ENCODE measurements at regions of chr1 and their contacts with region 1.

Region 1: GRCh38 chr1:226274138-226274537 is 34.8 kb downstream of the LIN9 start:
- DNase-seq: no peak
- H3K4me3 ChIP-seq: no peak overlapping the region
- H3K27ac ChIP-seq: no peak overlapping the region
- H3K4me1 ChIP-seq: no peaks in the 10 kb centered on the region
- CTCF ChIP-seq: no peak

Region 2: DNA sequence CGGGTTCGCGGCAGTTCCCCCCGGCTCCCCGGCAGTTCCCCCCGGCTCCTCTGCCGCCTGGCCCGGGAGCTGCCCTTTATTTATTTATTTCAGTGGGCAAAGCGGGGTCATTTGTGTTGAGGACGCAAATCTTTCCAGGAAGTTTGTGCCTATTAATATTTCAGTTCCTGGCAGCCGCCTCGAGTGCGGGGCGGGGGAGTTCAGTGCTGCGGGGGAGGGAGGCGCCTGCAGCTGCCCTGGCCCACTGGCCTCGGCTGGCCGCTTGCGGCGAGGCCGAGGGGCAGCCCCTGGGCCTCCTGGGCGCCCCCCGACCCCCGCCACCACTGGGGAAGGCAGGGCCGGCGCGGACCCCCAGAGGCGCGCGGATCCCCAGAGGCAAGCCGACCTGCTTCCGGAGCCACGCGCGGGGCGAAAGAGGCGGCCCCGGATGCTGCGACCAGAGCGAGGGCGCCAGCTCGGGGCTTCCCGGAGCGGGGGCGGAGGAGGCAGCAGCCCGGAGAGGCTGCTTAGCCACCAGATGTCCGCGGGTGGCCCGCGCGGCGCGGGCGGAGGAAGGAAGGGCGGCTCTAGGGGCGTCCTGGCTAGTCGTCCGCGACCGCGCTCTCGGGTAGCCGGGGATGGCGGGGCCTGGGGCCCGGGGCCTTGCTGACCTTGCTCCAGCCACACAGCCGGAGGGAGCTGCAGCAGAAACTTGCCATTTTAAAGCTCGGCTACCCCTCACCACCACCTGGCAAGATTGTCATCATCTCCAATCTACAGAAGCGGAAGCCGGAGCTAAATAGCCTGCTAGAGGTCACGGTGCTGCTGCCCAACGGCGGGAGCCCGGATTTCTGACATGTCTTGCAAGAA is 163.7 kb before region 1 on chr1:
- CTCF ChIA-PET with region 1: no interaction called
- POLR2A ChIA-PET with region 1: no interaction called
- intact Hi-C with region 1: no loop called
- DNase-seq: peak; percentile 88
- H3K4me3 ChIP-seq: peak overlapping the region; percentile 73
- H3K27ac ChIP-seq: peak overlapping the region; percentile 80
- H3K4me1 ChIP-seq: peaks cover 41% of the 10 kb centered on the region
- CTCF ChIP-seq: 0 out of 2 replicates have a peak, but pooled peaks have one; percentile 14

Region 3: DNA sequence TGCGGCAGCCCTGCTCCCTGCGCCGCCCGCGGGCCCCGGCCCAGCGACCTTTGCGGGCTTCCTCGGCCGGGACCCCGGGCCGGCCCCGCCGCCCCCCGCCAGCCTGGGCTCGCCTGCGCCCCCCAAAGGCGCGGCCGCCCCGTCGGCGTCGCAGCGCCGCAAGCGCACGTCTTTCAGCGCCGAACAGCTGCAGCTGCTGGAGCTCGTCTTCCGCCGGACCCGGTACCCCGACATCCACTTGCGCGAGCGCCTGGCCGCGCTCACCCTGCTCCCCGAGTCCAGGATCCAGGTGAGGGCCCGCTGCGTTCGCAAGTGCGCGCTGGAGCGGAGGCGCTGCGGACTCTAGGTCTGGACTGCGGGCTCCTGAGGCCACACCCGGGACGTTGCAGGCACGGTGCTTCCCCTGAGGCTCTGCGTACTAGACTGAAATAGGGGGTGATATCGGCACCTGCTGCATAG is 50.3 kb before region 1 on chr1:
- CTCF ChIA-PET with region 1: no interaction called
- POLR2A ChIA-PET with region 1: no interaction called
- intact Hi-C with region 1: loop called (anchors 5 kb)
- DNase-seq: peak; percentile 77
- H3K4me3 ChIP-seq: peak overlapping the region; percentile 67
- H3K27ac ChIP-seq: no peak overlapping the region
- H3K4me1 ChIP-seq: peaks cover 29% of the 10 kb centered on the region
- CTCF ChIP-seq: peak; percentile 58

Region 4: DNA sequence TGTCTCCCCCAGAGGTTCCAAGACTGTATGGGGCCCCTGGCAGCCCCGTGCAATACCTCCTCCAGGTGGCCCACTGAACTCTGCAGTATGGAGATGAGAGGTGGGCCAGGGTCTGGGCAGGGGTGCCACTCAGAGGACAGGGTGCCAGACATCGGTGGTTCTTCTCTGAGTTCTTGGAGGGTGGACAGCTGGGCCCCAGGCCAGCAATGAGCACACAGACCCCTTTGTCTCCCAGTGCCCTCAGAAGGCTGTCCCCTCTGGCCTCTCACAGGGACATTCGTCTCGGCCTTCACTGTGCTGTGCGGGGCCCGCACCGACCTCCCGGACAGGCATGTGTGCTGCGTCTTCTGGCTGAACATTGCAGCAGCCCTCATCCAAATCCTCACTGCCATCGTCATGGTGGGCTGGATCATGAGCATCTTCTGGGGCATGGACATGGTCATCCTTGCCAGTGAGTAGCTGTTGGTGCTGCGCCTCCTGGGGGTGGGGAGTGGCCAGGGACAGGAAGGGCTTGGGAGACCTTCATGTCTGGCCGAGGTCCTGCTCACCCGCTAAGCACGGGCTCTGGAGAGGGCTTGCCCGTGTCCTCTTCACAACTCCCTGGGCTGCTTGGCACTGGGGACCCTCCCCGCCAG is 322.5 kb after region 1 on chr1:
- CTCF ChIA-PET with region 1: no interaction called
- POLR2A ChIA-PET with region 1: no interaction called
- intact Hi-C with region 1: no loop called
- DNase-seq: no peak
- H3K4me3 ChIP-seq: no peak overlapping the region
- H3K27ac ChIP-seq: no peak overlapping the region
- H3K4me1 ChIP-seq: peaks cover 7% of the 10 kb centered on the region
- CTCF ChIP-seq: no peak

Measured in OCI-LY7 (cell line).